T-cell (primary cell): ENCODE measurements at regions of chr4 and their contacts with region 1.

Region 1: DNA sequence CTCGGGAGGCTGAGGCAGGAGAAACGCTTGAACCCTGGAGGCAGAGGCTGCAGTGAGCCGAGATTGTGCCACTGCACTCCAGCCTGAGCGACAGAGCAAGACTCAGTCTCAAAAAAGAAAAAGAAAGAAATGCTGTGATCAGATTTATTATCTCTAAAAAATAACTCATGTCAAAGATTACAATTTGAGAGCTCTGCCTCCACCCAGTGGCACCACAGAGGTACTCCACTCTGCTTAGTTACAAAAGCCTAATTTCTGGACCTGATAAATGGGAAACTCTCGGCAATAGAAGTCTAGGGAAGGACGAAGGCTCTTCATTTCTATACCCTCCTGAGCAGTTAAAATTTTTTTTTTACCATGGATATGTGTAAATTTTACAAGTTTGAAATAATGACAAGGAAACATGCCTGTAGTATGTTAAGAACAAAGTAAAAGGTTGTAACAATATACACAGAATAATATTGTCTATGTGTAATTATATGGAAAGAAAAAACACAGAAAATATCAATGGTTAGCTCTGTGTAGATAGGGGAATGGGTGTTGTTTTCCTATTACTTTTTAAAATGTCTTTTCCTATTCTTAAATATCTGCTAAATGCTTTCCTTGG is 149.8 kb downstream of the STIM2 start:
- DNase-seq: peak; percentile 13 to 76 (median 52)
- ATAC-seq: peak; percentile 63 to 79 (median 74)
- H3K4me3 ChIP-seq: no peak overlapping the region
- H3K4me3 Mint-ChIP-seq: no peak overlapping the region
- H3K27ac ChIP-seq: no peak overlapping the region
- H3K27ac Mint-ChIP-seq: peak overlapping the region; percentile 73 to 74
- H3K4me1 ChIP-seq: peaks cover 0 to 4% of the 10 kb centered on the region in 2 experiments
- H3K4me1 Mint-ChIP-seq: peaks cover 8 to 26% (median 15%) of the 10 kb centered on the region in 3 donors
- H3K27me3 ChIP-seq: no peaks in the 10 kb centered on the region
- H3K27me3 Mint-ChIP-seq: no peaks in the 10 kb centered on the region

Region 2: GRCh38 chr4:26342328-26343037 is 668.0 kb before region 1 on chr4:
- CTCF ChIA-PET with region 1: no interaction called
- POLR2A ChIA-PET with region 1: interaction called in 1 of 2 experiments, 16 read pairs
- DNase-seq: no peak
- ATAC-seq: no peak
- H3K4me3 ChIP-seq: no peak overlapping the region
- H3K4me3 Mint-ChIP-seq: no peak overlapping the region
- H3K27ac ChIP-seq: no peak overlapping the region
- H3K27ac Mint-ChIP-seq: no peak overlapping the region
- H3K4me1 ChIP-seq: peaks cover 0 to 2% of the 10 kb centered on the region in 2 experiments
- H3K4me1 Mint-ChIP-seq: peaks cover 63 to 68% (median 64%) of the 10 kb centered on the region in 3 donors
- H3K27me3 ChIP-seq: no peaks in the 10 kb centered on the region
- H3K27me3 Mint-ChIP-seq: no peaks in the 10 kb centered on the region

Region 3: GRCh38 chr4:26787461-26788340 is 222.7 kb before region 1 on chr4:
- CTCF ChIA-PET with region 1: interaction called, 6 to 25 read pairs
- POLR2A ChIA-PET with region 1: no interaction called
- DNase-seq: peak in 30 of 35 experiments; percentile 2 to 51 (median 20)
- ATAC-seq: peak; percentile 34 to 70 (median 44)
- H3K4me3 ChIP-seq: no peak overlapping the region
- H3K4me3 Mint-ChIP-seq: no peak overlapping the region
- H3K27ac ChIP-seq: no peak overlapping the region
- H3K27ac Mint-ChIP-seq: peak overlapping the region in 1 of 2 donors; percentile 24
- H3K4me1 ChIP-seq: peaks cover 0 to 10% of the 10 kb centered on the region in 2 experiments
- H3K4me1 Mint-ChIP-seq: peaks cover 4 to 17% (median 12%) of the 10 kb centered on the region in 3 donors
- H3K27me3 ChIP-seq: no peaks in the 10 kb centered on the region
- H3K27me3 Mint-ChIP-seq: peaks cover 0 to 3% of the 10 kb centered on the region in 2 donors